ENCODE measurements at regions of chr12 and their contacts with region 1.

Region 1: GRCh38 chr12:57621497-57622292 is 10.5 kb downstream of the ARHGEF25 start:
- DNase-seq: peak; percentile 80
- ATAC-seq: peak; percentile 73

Region 2: DNA sequence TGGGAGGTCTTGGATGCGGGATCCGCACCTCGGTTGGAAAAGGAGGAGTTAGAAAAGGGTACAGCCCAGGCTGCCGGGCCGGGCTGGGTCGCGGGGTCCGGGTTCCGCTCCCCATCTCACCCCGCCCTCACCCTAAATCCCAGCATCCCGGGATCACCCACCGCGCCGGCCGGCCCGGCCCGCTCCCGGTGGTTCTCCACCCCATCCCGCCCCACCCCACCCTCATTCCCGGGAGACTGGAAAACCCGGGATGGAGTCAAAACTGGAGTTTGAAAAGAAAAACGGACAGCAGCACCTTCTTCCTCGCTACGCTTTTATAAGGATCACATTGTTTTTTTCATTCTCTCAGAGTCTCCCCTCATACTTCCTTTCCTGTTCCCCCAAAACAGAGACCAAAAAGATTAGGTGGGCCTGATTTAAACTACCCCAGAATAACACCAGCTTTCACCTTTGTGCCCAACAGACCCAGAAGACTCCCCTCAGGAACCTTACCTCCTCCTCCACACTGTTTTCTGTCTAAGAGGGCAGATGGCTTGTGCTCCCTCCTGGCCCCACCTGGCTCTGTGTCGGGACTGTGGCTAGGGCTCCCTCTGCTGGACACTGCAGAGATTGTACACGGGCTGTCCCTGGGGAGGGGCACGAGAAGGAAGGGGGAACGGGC is 159.3 kb before region 1 on chr12:
- intact Hi-C with region 1: loop called (anchors 10 kb)
- DNase-seq: peak; percentile 90
- ATAC-seq: peak; percentile 76

Region 3: DNA sequence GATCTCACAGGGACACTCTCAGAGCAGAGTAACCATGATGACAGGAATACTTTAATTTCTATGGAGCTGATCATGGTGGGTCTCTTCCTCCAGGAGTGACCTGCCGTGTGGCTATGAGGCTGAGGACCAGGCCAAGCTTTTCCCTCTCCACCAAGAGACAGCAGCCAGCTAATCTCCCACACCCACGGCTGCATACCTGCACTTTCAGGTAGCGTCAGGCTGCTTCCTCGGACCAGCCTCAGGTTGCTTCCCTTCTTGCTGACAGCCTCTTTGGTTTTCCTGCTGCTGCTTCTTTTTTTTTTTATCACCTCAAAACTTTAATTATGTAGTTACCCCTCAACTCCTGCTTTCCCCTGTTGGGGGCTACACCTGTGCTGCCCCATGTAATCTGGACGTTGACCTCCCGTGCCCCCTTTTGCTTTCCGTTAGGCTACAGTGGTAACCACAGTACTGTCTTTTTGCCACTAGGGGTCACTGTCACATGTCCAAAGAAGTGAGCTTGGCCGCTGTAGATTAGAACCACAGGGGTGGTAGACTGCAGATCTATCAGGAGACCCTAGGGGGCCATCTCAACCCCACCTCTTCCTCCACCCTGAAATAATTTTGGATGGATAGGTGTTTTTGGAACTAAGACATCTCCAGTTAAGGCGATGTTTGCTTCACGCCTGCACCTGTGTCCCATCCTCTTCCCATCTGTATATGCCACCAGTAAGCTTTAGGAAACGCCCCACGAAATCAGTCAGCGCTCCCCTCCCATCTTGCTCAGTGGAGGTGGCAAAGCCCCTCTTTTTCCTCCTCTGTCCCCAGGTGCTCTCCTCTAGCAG is 38.5 kb before region 1 on chr12:
- intact Hi-C with region 1: loop called (anchors 1 kb)
- DNase-seq: no peak
- ATAC-seq: peak; percentile 95

Region 4: DNA sequence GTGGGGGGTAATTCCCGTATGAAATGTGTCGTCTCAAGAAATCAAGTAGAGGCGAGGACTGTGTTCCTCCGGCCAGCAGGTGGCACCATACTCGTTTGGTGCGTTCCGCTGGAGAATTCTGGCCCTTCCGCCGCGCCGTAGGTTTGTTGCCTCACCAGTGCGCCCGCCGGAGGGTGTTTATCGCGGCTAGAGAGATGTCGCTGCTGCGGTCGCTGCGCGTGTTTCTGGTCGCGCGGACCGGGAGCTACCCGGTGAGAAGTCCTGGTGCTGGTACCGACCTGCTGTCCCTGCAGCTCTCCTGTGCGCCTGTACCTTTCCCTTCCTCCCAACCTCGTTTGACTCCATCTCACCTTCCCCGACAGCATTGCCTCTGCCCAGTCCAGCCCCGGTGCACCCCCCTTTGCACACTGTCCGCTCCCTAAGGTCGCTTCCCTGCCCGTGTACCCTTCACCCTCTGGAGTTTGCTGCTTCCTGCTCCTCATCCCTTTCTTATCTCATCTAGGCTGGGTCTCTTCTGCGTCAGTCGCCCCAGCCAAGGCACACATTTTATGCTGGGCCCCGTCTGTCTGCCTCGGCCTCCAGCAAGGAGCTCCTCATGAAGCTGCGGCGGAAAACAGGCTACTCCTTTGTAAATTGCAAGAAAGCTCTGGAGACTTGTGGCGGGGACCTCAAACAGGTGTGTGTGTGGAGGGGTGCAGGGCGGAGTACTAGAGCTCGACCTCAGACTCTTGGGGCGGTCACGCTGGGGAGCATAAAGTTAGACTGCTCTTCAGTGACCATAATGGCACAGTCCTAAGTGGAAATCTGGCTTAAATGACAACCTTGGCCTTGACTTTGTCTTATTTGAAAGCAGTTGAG is 161.1 kb after region 1 on chr12 and contains the start of gene TSFM:
- intact Hi-C with region 1: no loop called
- DNase-seq: peak; percentile 99
- ATAC-seq: peak; percentile 92
- total RNA-seq, gene TSFM: 48.2 TPM

Measured in Right ventricle myocardium inferior (tissue), 1 donor.